ENCODE measurements at regions of chr21 and their contacts with region 1.

Region 1: DNA sequence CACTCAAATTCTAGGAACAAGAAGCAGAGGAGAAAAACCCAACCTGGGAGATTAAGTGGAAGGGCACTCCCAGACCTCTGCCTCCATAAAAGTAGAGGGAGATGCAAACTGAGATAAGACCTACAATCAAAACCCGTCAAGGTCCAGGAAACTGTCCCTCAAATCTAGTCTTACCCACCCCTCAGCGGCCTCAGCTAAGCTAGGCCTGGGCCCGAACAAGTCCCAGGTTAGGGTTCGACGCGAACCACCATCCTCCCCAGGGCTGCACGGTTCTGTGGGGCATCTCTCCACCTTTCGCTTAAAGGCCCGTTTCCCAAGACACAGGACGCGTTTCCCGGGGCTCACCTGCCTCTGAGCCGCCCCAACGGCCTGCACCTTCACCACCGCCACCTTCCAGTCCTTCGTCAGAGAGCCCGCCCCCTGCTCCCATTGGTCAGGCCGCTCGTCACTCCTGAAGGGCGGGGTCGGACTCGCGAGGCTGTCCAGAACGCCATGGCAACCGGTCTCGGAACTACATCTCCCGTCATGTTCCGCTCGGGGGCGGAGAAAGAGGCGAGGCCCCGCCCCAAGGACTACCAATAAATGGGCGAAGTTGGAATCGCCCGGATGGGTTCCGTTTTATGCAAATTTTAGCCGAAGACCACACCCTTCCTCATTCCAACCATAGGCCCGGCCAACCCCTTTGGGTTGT is at the start of gene CRYZL1:
- DNase-seq: peak; percentile 100
- H3K4me3 ChIP-seq: peak within 1 kb of the TSS; percentile 64 to 99 (median 87)
- H3K27ac ChIP-seq: peak within 1 kb of the TSS; percentile 84 to 100 (median 96)
- H3K27me3 ChIP-seq: no peaks in the 10 kb centered on the region
- CTCF ChIP-seq: peak in 3 of 56 donors; percentile 13 to 28 (median 15)
- total RNA-seq, gene CRYZL1: 45.4 to 86.9 (median 65.7) TPM

Region 2: GRCh38 chr21:32770871-32771523 is 870.5 kb before region 1 on chr21:
- intact Hi-C with region 1: loop called in 1 of 2 experiments (anchors 5 kb)
- DNase-seq: peak in 7 of 10 donors; percentile 5 to 56 (median 38)
- H3K4me3 ChIP-seq: peak overlapping the region; percentile 48 to 97 (median 85)
- H3K27ac ChIP-seq: peak overlapping the region in 57 of 59 donors; percentile 36 to 97 (median 86)
- H3K27me3 ChIP-seq: no peaks in the 10 kb centered on the region
- CTCF ChIP-seq: peak in 2 of 56 donors; percentile 7 to 11

Region 3: GRCh38 chr21:33542640-33543504 is 98.6 kb before region 1 on chr21 and contains the start of gene SON:
- intact Hi-C with region 1: loop called in 1 of 2 experiments (anchors 5 kb)
- DNase-seq: peak; percentile 99 to 100 (median 99)
- H3K4me3 ChIP-seq: peak within 1 kb of the TSS; percentile 63 to 95 (median 85)
- H3K27ac ChIP-seq: peak within 1 kb of the TSS; percentile 97 to 100 (median 100)
- H3K27me3 ChIP-seq: no peaks in the 10 kb centered on the region
- CTCF ChIP-seq: peak in 12 of 56 donors; percentile 3 to 29 (median 14)
- total RNA-seq, gene SON: 177 to 330 (median 263) TPM

Region 4: DNA sequence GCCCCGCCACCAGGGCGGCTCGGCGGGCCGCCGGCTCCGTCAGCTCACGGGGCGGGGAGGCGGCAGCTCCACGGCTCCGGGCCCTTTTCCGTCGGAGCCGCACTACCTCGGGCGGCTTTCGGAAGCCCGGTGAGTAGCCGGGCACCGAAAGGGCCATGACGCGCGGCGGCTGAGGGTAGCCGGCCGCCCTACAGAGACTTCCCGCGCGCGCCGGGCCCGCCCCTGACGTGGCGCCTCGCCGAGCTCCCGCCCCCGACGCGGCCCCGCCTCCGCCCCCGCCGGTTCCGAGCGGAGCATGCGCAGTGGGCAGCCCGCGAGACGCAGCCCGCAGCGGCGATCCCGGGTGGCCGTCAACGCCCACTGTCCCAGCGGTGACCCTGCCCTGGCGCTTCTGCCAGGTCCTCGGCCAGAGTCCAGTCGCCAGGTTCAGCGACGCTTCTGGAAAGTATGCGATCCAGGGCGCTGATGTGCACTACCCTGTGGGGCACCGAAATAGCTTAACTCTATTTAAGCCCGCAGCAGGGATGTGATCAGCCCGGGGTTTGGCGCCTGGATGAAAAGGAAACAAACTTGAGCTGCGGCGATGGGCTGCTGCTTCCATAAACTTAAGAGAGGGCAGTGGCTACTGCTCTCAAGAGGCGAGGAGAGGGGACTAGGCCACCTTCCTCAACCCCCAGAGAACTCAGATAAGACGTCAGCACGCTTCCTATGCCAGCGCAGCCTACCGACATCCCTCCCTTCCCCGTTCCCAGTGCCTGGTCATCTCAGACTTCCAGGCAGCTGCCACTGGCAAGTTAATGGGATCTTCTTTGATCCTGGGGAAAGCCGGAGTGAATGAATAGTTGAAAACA is 52.8 kb before region 1 on chr21 and contains the start of gene DONSON:
- intact Hi-C with region 1: loop called in 1 of 2 experiments (anchors 2 kb)
- DNase-seq: peak; percentile 51 to 94 (median 79)
- H3K4me3 ChIP-seq: peak within 1 kb of the TSS; percentile 58 to 97 (median 85)
- H3K27ac ChIP-seq: peak within 1 kb of the TSS; percentile 4 to 92 (median 82)
- H3K27me3 ChIP-seq: no peaks in the 10 kb centered on the region
- CTCF ChIP-seq: peak in 25 of 56 donors; percentile 4 to 44 (median 29)
- total RNA-seq, gene DONSON: 7.4 to 30.1 (median 16.4) TPM

Region 5: DNA sequence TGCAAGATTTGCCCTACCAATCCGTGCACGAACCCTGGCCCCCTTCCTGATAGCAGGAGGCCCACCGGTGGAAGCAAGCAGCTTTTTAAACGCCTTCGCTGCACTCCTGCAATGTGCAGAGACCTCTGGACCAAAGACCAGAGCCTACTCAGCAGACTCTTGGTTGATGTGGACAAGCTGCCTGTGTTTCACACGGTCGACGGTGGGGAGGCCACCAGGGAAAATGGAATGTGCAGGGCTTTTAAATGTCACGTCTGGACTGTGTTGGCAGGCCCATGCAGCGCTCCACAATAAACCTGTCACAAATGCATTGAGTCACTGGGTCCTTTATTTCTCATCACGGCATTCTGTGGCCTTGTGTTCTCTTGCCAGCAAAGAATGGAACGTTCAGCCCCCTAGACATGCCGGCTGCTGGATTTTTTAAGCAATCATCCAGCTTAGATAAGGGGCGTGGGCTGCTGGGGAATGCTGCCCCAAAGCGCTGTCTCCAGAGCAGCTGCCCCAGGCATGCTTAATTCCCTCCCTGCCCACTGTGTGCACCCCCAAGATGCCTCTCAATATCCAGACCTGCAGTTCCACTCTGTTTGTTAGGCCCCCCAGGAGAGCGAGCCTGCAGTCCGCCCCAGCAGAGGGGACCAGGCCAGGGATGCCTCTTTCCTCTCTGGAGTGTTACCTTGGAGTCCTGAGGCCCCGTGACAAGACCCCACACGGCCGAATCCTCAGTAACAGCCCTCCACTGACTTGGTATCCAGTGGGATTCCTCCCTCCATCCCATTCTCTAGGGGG is 202.8 kb after region 1 on chr21:
- intact Hi-C with region 1: no loop called
- DNase-seq: peak in 2 of 10 donors; percentile 14 to 21
- H3K4me3 ChIP-seq: no peak overlapping the region
- H3K27ac ChIP-seq: peak overlapping the region in 29 of 59 donors; percentile 3 to 66 (median 30)
- H3K27me3 ChIP-seq: no peaks in the 10 kb centered on the region
- CTCF ChIP-seq: no peak

Region 6: DNA sequence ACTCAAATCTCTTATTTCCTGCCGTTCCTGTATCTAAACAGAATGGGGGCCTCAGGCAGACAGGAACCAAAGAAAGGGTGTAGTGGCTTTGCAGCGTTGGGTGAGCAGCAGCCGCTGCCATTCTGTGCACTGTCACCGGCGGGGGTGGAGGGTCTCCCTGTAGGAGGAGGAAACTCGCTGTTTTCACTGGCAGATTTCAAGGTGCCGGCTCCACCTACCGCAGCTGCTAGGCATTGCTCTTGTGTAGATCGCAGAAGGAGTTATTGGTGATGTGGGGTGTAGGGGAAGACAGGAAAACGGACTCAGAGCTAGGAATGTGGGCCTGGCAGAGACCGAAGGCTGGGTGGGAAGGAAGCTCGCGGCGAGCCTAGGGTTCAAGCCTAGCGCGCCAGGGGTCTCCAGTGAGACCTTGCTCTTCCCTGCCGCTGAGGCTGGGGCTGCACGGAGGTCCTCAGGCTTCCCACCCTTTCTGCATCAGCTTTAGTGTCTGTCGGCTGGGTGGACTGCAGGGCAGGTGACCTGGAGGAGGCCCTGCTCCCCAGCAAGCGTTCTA is 253.3 kb after region 1 on chr21:
- intact Hi-C with region 1: loop called in 1 of 2 experiments (anchors 10 kb)
- DNase-seq: peak; percentile 49 to 84 (median 78)
- H3K4me3 ChIP-seq: peak overlapping the region in 58 of 59 donors; percentile 2 to 60 (median 42)
- H3K27ac ChIP-seq: peak overlapping the region in 16 of 59 donors; percentile 0 to 79 (median 22)
- H3K27me3 ChIP-seq: no peaks in the 10 kb centered on the region
- CTCF ChIP-seq: peak in 55 of 56 donors; percentile 8 to 73 (median 53)

Region 7: DNA sequence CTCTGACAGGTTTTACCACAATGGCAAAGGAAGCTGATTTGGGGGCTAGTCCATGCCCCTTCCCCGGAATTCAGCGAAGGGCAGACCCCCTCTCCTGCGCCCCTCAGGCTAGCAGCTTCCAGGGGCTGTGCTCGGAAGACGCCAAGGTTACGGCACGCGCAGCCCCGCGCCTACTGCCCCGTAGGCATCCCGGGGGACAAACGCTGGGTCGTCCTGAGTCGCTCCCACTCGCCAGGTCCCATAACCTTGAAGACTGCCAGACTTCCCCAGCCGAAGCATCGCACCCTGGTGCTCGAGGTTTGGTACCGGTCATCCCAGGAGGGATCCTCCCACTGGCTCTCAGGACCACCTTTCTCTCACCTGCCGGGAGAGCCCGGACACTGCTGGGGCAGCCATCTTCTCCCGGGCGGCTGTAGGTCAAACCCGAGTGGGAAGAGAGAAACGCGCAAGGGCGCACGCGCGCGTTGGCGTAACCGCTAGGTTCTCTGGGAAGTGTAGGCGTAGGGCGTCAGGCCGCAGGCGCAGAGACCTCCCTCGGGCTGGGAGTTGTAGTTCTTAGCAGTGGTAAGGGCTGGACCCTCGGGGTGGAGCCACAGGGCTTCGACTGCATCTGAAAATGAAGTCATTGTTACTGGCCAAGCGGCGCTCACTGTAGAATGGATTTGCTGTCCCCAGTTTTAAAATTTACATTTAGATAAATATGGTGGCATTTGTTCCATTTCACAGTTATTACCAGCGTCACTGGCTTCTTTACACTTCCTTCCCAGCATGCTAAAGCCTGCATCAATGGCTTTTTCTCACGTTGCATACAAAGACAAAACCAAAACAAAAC is 274.1 kb after region 1 on chr21 and contains the start of gene ATP5PO:
- intact Hi-C with region 1: loop called in 1 of 2 experiments (anchors 5 kb)
- DNase-seq: peak; percentile 97 to 99 (median 98)
- H3K4me3 ChIP-seq: peak within 1 kb of the TSS; percentile 64 to 100 (median 91)
- H3K27ac ChIP-seq: peak within 1 kb of the TSS; percentile 3 to 97 (median 90)
- H3K27me3 ChIP-seq: no peaks in the 10 kb centered on the region
- CTCF ChIP-seq: peak in 38 of 56 donors; percentile 6 to 66 (median 33)
- total RNA-seq, gene ATP5PO: 104 to 254 (median 186) TPM